ENCODE measurements at regions of chr10 and their contacts with region 1.

Region 1: GRCh38 chr10:84352251-84352842 is 24.0 kb downstream of the CCSER2 start:
- DNase-seq: peak; percentile 81
- H3K4me3 Mint-ChIP-seq: no peak overlapping the region
- H3K27ac Mint-ChIP-seq: peak overlapping the region; percentile 28
- H3K4me1 Mint-ChIP-seq: peaks cover 71% of the 10 kb centered on the region
- H3K27me3 Mint-ChIP-seq: no peaks in the 10 kb centered on the region

Region 2: DNA sequence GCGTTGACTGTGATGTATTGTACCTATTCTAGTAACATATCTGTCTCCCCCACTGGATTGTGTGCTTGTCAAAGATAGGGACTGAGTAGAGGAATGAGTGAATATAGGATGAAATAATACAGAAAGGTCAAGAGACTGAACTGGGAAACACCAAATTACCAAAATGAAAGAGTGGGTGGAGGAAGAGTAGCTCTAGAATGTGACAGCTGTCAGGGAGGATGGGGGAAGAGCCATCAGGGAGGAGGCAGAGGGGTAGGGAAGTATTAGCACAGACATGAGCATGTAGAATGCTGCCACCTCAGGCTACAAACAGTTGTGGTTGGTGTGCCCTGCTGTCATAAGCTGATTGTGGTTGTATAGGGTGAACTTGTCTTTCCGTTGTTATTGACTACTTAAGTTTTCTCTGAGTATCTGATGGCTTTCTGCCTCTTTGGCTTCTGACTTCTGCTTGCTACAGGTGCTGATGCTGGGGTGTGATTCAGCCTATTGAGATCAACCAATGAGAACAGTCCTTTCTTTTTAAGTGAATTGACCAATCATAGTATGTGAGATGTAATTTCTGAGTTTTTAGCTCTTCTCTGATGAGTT is 18.4 kb before region 1 on chr10:
- CTCF ChIA-PET with region 1: interaction called, 47 read pairs
- POLR2A ChIA-PET with region 1: no interaction called
- intact Hi-C with region 1: no loop called
- DNase-seq: peak; percentile 82
- H3K4me3 Mint-ChIP-seq: peak overlapping the region; percentile 36
- H3K27ac Mint-ChIP-seq: peak overlapping the region; percentile 78
- H3K4me1 Mint-ChIP-seq: peaks cover 40% of the 10 kb centered on the region
- H3K27me3 Mint-ChIP-seq: no peaks in the 10 kb centered on the region

Region 3: DNA sequence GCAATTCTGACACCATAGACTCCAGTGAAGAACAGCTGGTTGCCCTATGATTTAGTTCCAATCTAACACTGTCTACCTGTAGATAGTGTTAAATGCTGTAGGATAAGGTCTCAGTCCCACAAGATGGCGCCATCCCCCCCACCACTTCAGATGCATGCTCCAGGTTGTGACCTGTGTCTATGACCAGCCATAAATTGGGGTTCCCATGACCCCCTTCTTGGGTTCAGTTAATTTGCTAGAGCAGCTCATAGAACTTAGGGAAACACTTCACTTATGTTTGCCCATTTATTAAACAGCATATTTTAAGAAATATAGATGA is 10.8 kb before region 1 on chr10:
- CTCF ChIA-PET with region 1: interaction called, 47 read pairs
- POLR2A ChIA-PET with region 1: no interaction called
- intact Hi-C with region 1: no loop called
- DNase-seq: peak; percentile 43
- H3K4me3 Mint-ChIP-seq: no peak overlapping the region
- H3K27ac Mint-ChIP-seq: no peak overlapping the region
- H3K4me1 Mint-ChIP-seq: peaks cover 50% of the 10 kb centered on the region
- H3K27me3 Mint-ChIP-seq: no peaks in the 10 kb centered on the region

Region 4: DNA sequence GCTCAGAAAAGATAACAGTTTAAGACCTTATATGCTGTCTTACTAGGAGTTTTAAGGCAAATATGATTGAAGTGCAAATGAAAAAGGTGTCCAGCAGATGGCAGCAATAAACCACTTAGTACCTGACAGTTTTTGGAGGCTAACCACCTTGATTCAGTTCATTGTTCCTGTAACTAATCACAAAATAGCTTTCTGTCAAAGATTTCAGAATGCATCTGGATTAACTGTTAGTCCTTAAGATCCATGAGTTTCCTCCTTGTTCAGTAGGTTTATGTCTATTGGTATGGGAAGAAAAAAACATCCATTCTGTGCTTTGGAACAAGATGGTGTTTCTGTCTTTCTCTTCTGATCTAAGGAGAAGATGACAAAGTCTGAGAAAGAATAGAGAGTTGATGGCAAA is 22.7 kb after region 1 on chr10:
- CTCF ChIA-PET with region 1: interaction called, 40 read pairs
- POLR2A ChIA-PET with region 1: interaction called, 3 read pairs
- intact Hi-C with region 1: loop called (anchors 2 kb)
- DNase-seq: peak; percentile 18
- H3K4me3 Mint-ChIP-seq: no peak overlapping the region
- H3K27ac Mint-ChIP-seq: peak overlapping the region; percentile 65
- H3K4me1 Mint-ChIP-seq: peaks cover 51% of the 10 kb centered on the region
- H3K27me3 Mint-ChIP-seq: no peaks in the 10 kb centered on the region